MCF 10A (cell line): ENCODE measurements at regions of chr2 and their contacts with region 1.

Region 1: DNA sequence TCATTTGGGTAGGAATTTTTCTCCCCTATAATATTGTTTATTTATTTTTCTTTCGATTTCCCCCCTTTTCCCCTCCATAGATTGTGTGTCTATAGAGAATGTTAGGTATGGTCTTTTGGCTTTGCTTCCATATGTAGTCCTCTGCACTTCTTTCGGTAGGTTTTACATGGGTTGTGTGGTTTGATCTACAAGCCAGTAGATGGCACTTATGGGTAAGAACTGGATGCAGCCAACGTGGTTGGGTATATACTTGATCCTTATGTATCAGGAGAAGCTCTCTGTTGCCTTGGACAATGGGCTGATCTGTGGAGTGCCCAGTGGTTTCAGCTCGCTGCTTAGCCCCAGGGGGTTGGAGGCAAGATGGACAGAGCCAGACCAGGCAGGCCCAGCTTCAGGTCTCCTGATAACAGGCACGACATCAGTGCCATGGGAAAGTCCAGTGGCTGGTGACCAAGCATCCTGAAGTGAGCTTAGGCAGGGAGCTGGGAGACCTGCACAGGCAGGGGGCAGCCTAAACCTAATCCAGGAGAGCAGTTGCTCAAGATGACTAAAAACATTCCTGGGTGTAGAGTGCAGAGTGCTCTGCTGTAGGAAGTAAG is 488.3 kb downstream of the CCDC85A start:
- DNase-seq: no peak
- H3K4me3 Mint-ChIP-seq: no peak overlapping the region
- H3K27ac Mint-ChIP-seq: no peak overlapping the region
- H3K4me1 Mint-ChIP-seq: no peaks in the 10 kb centered on the region
- H3K27me3 Mint-ChIP-seq: no peaks in the 10 kb centered on the region
- CTCF ChIP-seq: no peak

Region 2: DNA sequence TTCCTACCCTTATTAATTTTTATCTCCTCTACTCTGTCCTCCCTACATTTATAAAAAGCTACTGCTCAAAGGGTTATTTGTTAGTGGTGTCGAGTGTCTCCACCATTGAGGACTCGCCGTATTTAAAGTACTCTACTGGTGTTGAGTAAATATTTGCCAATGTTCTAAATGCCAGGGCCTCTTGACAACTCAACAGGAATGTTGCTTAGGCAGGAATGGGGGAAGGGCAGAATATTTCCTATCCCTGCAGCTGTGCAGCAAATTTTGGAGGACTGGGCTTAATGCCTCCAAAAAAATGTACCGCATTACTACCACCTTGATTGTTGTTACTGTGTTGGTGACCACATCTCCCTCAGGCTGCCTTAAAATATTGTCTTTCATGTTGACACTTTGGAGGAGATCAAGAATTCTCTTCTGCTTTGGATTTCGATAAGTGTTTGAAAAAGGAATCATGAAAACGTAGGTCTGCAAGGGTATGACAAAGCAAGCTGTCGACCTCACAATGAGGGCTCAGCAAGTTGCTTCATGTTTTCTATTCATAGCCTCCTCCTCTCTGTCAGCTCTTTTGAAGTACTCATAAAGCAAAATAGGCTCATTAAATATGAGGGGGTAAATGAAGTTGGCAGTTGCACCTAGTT is 832.8 kb before region 1 on chr2:
- CTCF ChIA-PET with region 1: no interaction called
- POLR2A ChIA-PET with region 1: no interaction called
- intact Hi-C with region 1: no loop called
- DNase-seq: peak; percentile 77
- H3K4me3 Mint-ChIP-seq: peak overlapping the region; percentile 5
- H3K27ac Mint-ChIP-seq: no peak overlapping the region
- H3K4me1 Mint-ChIP-seq: no peaks in the 10 kb centered on the region
- H3K27me3 Mint-ChIP-seq: no peaks in the 10 kb centered on the region
- CTCF ChIP-seq: no peak

Region 3: DNA sequence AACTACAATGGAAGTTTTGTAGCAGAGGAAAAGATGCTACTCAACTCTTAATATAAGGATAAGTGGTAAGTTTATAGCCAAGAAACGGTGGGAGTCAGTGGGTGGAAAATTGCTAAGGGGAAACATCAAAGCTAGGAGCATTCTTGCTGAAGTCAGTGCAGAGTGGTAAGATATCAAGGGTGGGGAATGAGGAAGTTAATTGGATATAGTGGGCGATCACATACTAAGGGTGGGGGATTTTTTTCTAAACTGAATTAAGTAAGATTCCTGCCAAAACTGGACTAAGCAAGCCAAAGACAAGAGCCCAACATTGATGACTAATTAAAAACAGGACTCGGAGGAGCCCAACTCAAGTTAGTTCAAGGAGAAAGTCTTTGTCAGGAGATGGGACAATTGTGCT is 37.1 kb after region 1 on chr2:
- CTCF ChIA-PET with region 1: no interaction called
- POLR2A ChIA-PET with region 1: no interaction called
- intact Hi-C with region 1: loop called (anchors 1 kb)
- DNase-seq: no peak
- H3K4me3 Mint-ChIP-seq: no peak overlapping the region
- H3K27ac Mint-ChIP-seq: no peak overlapping the region
- H3K4me1 Mint-ChIP-seq: peaks cover 4% of the 10 kb centered on the region
- H3K27me3 Mint-ChIP-seq: no peaks in the 10 kb centered on the region
- CTCF ChIP-seq: no peak